AG04449 (cell line): ENCODE measurements at regions of chr6 and their contacts with region 1.

Region 1: GRCh38 chr6:152552616-152553209 is 84.4 kb downstream of the SYNE1 start:
- DNase-seq: no peak
- H3K4me3 ChIP-seq: no peak overlapping the region
- CTCF ChIP-seq: peak; percentile 85

Region 2: DNA sequence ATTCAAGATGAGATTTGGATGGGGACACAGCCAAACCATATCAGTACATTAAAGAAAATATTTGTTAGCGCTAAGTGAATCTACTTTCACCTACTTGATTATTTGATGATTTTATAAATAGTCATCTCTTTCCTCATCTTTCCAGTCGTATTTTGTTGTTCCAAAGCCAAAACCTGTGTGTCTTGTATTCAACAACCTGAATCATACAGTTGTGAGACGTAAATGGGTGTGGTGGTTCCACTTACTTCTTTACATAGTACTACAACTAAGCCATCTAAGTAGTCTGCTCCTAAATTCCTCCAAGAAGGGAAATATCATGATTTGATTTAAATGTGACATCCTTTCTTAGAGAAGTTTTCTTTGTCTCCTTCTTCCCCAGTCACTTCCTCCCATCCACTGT is 612.4 kb before region 1 on chr6:
- CTCF ChIA-PET with region 1: no interaction called
- POLR2A ChIA-PET with region 1: no interaction called
- DNase-seq: no peak
- H3K4me3 ChIP-seq: no peak overlapping the region
- CTCF ChIP-seq: no peak

Region 3: GRCh38 chr6:152484806-152485205 is 67.9 kb before region 1 on chr6:
- CTCF ChIA-PET with region 1: interaction called, 15 read pairs
- POLR2A ChIA-PET with region 1: no interaction called
- DNase-seq: no peak
- H3K4me3 ChIP-seq: no peak overlapping the region
- CTCF ChIP-seq: no peak

Region 4: GRCh38 chr6:152540381-152540780 is 12.3 kb before region 1 on chr6:
- CTCF ChIA-PET with region 1: interaction called, 19 read pairs
- POLR2A ChIA-PET with region 1: no interaction called
- DNase-seq: no peak
- H3K4me3 ChIP-seq: no peak overlapping the region
- CTCF ChIP-seq: no peak

Region 5: GRCh38 chr6:152575621-152576150 is 23.0 kb after region 1 on chr6:
- CTCF ChIA-PET with region 1: interaction called, 24 read pairs
- POLR2A ChIA-PET with region 1: no interaction called
- DNase-seq: no peak
- H3K4me3 ChIP-seq: no peak overlapping the region
- CTCF ChIP-seq: no peak

Region 6: DNA sequence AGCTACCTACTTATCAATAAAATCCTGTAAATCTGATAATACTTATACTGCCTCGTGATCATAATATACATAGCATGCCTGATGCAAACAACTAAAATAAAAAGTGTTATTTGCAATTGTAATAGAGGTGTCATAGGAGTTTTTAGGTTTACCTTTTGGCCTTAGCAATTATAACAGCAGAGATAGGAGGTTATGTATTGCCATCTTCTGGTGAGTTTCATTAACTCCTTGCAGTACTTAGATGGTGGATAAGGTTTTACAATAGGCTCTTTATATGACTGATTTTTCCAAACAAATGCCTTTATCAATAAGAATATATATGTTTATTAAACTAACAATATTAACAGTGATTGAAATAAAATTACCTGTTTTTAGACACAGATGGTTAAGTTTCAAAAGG is 117.2 kb after region 1 on chr6:
- CTCF ChIA-PET with region 1: interaction called, 68 read pairs
- POLR2A ChIA-PET with region 1: no interaction called
- DNase-seq: no peak
- H3K4me3 ChIP-seq: no peak overlapping the region
- CTCF ChIP-seq: peak; percentile 38